H1 (cell line): ENCODE measurements at regions of chr19 and their contacts with region 1.

Region 1: GRCh38 chr19:18419195-18419698 is at the start of gene SSBP4:
- DNase-seq: peak in 1 of 2 experiments; percentile 87
- H3K4me3 ChIP-seq: peak within 1 kb of the TSS; percentile 33 to 63 (median 46)
- H3K27ac ChIP-seq: no peak within 1 kb of the TSS
- H3K4me1 ChIP-seq: peaks cover 0 to 39% (median 25%) of the 10 kb centered on the region in 4 experiments; a peak in 6 of 7 replicates
- H3K27me3 ChIP-seq: peaks cover 5 to 29% (median 23%) of the 10 kb centered on the region in 4 experiments
- CTCF ChIP-seq: peak; percentile 32 to 80 (median 39)
- EP300 ChIP-seq: peak; percentile 62 to 98; a peak in 2 of 3 replicates
- POLR2A ChIP-seq: no peak
- RAD21 ChIP-seq: peak in 1 of 2 experiments; percentile 37; a peak in 2 of 4 replicates
- total RNA-seq, gene SSBP4: 26.4 and 30.5 TPM in 2 replicates

Region 2: DNA sequence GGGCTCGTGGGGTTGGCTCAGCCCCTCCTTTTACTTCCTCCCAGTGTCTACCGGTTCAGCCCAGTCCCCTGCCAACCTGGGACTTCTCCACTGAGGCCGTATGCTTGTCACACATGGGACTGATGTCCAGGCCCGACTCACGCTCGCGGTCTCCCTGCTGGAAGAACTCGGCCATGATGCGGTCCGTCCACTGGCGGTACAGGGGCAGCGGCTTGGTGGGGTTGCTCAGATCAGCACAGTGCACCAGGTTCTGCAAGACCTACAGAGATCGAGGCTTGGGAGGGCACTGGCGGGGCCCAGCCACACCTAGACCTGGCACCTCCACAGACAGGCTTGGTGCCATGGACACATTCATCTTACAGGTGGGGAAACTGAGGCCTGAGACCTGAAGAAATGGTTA is 207.6 kb before region 1 on chr19:
- CTCF ChIA-PET with region 1: no interaction called
- POLR2A ChIA-PET with region 1: no interaction called
- DNase-seq: no peak
- H3K4me3 ChIP-seq: no peak overlapping the region
- H3K27ac ChIP-seq: no peak overlapping the region
- H3K4me1 ChIP-seq: no peaks in the 10 kb centered on the region
- H3K27me3 ChIP-seq: no peaks in the 10 kb centered on the region
- CTCF ChIP-seq: no peak
- EP300 ChIP-seq: no peak
- POLR2A ChIP-seq: no peak
- RAD21 ChIP-seq: no peak

Region 3: GRCh38 chr19:18322759-18323460 is 96.3 kb before region 1 on chr19 and contains the start of gene LSM4:
- CTCF ChIA-PET with region 1: interaction called, 45 read pairs
- POLR2A ChIA-PET with region 1: interaction called, 3 read pairs
- DNase-seq: peak; percentile 95 to 99
- H3K4me3 ChIP-seq: peak within 1 kb of the TSS; percentile 70 to 82 (median 78)
- H3K27ac ChIP-seq: peak within 1 kb of the TSS; percentile 92
- H3K4me1 ChIP-seq: peaks cover 6 to 9% (median 7%) of the 10 kb centered on the region in 4 experiments
- H3K27me3 ChIP-seq: no peaks in the 10 kb centered on the region
- CTCF ChIP-seq: peak; percentile 33 to 45 (median 39)
- EP300 ChIP-seq: peak in 1 of 2 experiments; percentile 74; a peak in 1 of 3 replicates
- POLR2A ChIP-seq: peak; percentile 79 to 84
- RAD21 ChIP-seq: peak; percentile 47 to 49
- total RNA-seq, gene LSM4: 319 and 344 TPM in 2 replicates

Region 4: DNA sequence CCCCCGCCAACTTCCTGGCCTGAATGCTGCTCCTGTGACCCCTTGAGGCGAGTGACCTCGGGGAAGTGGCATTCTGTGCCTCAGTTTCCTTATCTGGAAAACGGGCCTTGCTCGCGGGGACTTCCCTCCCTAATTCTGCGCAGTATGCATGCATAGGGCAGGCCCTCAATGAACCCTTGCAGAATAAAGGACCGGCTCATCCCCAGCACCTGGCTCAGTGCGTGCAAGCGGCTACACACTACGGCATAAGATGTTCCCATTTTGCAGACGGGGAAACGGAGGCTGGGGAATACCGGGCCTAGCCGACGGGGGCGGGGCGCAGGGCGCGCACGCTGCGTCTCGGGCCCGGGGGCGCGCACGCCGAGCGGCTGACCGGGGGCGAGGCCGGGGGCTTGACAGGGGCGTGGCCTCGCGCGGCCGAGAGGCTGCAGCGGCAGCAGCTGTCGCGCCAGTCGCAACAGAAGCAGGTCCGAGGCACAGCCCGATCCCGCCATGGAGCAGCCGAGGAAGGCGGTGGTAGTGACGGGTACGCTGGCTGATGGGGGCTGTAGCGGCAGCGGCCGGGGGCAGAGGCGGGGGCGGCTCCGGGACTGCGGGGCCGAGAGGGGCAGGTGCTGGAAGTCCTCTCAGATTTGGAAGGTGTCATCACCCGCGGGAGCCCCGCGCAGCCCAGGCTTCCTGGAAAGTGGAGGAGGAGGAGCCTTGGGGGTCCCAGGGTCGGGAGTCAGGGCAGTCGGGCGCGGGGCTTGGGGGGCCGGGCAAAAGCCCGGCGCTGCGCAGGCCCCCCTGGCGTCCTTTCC is 78.9 kb before region 1 on chr19 and contains the start of gene PGPEP1:
- CTCF ChIA-PET with region 1: interaction called, 47 read pairs
- POLR2A ChIA-PET with region 1: interaction called, 9 read pairs
- DNase-seq: peak in 1 of 2 experiments; percentile 97
- H3K4me3 ChIP-seq: peak within 1 kb of the TSS; percentile 55 to 85 (median 62)
- H3K27ac ChIP-seq: no peak within 1 kb of the TSS
- H3K4me1 ChIP-seq: peaks cover 0 to 11% (median 7%) of the 10 kb centered on the region in 4 experiments; a peak in 6 of 7 replicates
- H3K27me3 ChIP-seq: 0 out of 7 replicates have a peak, but pooled peaks cover 0 to 2% (median 0%) of the 10 kb centered on the region in 4 experiments
- CTCF ChIP-seq: no peak
- EP300 ChIP-seq: no peak
- POLR2A ChIP-seq: 0 out of 3 replicates have a peak, but pooled peaks of 1 of the 2 experiments have one; percentile 26
- RAD21 ChIP-seq: no peak
- total RNA-seq, gene PGPEP1: 33.2 and 33.4 TPM in 2 replicates

Region 5: DNA sequence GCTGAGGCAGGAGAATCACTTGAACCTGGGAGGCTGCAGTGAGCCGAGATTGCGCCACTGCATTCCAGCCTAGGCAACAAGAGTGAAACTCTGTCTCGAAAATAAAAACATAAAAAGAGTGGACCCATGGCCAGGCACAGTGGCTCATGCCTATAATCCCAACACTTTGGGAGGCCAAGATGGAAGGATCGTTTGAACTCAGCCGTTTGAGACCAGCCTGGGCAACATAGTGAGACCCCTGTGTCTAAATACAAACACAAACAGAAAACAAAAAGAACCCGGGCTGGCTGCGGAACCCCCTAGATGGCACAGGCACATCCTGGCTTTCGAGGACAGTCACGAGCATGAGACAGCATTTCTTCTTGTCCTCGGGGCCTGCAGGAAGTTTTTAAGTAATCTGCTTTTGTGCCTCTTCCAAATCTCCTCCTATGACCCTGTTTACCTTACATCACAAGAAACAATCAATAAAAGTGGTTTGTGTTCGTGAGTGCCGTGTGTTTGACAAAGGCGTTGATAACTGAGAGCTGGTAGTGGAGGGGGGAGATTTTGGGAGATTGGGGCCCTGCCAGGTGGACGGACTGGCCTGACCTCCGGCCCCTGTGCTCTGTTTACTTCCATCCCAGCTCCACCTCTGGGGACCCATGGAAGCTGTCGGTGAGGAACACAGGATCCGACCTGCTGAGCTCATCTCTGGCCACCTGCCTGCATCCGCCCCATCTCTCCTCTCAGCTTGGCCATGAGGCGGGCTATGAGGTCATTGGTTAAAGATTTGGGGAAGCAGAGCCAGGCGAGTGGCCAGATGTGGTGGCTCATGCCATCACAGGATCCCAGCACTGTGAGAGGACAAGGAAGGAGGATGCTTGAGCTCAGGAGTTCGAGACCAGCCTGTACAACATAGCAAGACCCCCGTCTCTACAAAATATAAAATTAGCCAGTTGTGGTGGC is 39.2 kb before region 1 on chr19:
- CTCF ChIA-PET with region 1: interaction called, 177 read pairs
- POLR2A ChIA-PET with region 1: interaction called, 3 read pairs
- DNase-seq: no peak
- H3K4me3 ChIP-seq: no peak overlapping the region
- H3K27ac ChIP-seq: no peak overlapping the region
- H3K4me1 ChIP-seq: peaks cover 0 to 3% (median 1%) of the 10 kb centered on the region in 4 experiments; a peak in 1 of 7 replicates
- H3K27me3 ChIP-seq: no peaks in the 10 kb centered on the region
- CTCF ChIP-seq: no peak
- EP300 ChIP-seq: no peak
- POLR2A ChIP-seq: no peak
- RAD21 ChIP-seq: no peak

Region 6: GRCh38 chr19:18401580-18402112 is 17.6 kb before region 1 on chr19:
- CTCF ChIA-PET with region 1: interaction called, 79 read pairs
- POLR2A ChIA-PET with region 1: interaction called, 6 read pairs
- DNase-seq: no peak
- H3K4me3 ChIP-seq: no peak overlapping the region
- H3K27ac ChIP-seq: no peak overlapping the region
- H3K4me1 ChIP-seq: peaks cover 0 to 8% (median 3%) of the 10 kb centered on the region in 4 experiments; a peak in 5 of 7 replicates
- H3K27me3 ChIP-seq: peaks cover 0 to 3% (median under 1%) of the 10 kb centered on the region in 4 experiments; a peak in 3 of 7 replicates
- CTCF ChIP-seq: peak; percentile 41 to 62 (median 48)
- EP300 ChIP-seq: no peak
- POLR2A ChIP-seq: no peak
- RAD21 ChIP-seq: peak; percentile 34 to 45; a peak in 3 of 4 replicates

Region 7: DNA sequence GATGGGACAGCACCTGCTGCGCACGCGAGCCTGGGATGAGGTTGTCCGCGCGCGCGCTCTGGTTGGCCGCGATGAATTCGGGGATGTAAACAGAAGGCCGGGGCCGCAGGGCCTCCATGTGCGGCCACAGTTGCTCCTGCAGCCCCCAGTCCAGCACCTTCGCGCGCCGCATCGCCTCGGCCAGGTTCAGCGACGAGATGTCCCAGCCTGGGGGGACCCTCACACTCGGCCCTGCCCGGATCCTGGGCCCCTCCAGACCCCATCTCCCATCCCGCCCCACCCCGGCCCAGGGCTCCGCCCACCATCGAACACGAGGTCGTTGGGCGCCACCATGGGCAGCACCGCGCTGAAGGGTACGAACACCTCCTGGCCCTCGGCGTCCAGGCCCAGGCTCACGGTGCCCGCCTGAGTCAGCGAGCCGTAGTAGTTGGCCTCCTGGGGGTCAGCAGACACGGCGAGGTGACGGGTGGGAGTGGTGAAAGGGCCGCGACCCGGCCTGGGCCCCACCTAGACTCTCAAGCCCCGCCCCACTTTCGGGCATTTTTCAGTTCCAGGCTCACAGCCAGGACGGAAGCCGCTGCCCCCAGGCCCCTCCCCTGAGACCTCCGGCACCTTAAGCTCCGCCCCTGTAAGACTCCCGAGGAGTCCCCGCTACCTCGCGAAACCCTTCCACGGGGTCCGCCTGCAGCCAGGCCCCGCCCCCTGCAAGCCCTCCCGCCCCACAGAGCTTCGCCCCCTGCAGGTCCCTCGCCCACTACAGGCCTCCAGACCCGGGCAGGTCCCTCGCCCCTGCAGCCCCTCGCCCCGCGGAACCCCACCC is 17.6 kb after region 1 on chr19:
- CTCF ChIA-PET with region 1: interaction called, 6 read pairs
- POLR2A ChIA-PET with region 1: interaction called, 65 read pairs
- DNase-seq: peak in 1 of 2 experiments; percentile 92
- H3K4me3 ChIP-seq: peak overlapping the region; percentile 62 to 94 (median 78)
- H3K27ac ChIP-seq: peak overlapping the region; percentile 58; the same call in 1 of the 2 replicates
- H3K4me1 ChIP-seq: peaks cover 5 to 39% (median 26%) of the 10 kb centered on the region in 4 experiments
- H3K27me3 ChIP-seq: no peaks in the 10 kb centered on the region; a peak in 1 of 7 replicates
- CTCF ChIP-seq: no peak
- EP300 ChIP-seq: no peak
- POLR2A ChIP-seq: peak in 1 of 2 experiments; percentile 33; a peak in 2 of 3 replicates
- RAD21 ChIP-seq: no peak